H1 (cell line): ENCODE measurements at regions of chr16 and their contacts with region 1.

Region 1: DNA sequence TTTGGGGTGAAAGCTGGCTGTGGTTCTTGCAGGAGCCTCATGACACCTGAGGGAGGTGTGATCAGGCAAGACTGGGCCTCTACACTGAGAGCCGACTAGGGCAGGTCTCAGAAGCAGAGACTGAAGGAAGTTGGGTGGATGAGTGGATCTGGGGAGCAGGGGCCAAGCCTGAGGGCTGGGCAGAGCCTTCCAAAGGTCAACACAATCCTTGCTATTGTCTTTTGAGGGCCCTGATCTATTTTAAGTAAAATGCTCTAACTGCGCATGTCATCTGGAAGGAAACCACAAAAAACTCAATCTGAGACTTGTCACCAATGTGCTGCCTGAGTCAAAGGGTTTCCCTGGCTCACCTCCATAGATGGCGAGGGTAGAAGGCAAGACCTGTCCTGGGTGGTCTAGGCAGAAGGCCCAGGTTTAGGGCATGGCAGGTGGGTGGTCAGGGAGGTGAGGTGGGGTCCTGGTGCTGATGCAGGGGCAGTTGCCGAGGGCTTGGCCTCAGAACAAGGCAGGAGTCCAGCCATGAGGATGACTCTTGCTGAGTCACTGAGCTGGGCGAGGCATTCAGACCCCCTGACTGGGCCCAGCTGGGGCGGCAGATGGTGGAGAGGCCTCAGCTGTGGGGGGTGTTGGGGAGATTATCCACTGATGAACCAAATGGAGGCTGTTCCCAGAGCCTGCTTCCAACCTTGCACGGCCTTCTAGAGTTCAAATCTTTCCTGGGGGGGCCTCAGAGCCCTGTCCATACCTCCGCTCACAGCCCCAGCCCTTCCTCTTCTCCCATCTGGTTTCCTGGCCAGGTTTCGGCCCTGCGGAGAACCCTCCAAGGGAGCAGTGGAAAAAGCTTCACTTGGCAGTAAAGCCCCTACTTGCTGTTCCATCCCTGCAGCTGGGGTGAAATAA is 5.1 kb downstream of the MVP start:
- DNase-seq: no peak
- H3K4me3 ChIP-seq: no peak overlapping the region
- H3K27ac ChIP-seq: no peak overlapping the region; the same call in 1 of the 2 replicates
- H3K4me1 ChIP-seq: peaks cover 0 to 8% (median 3%) of the 10 kb centered on the region in 4 experiments; a peak in 5 of 7 replicates
- H3K27me3 ChIP-seq: 0 out of 7 replicates have a peak, but pooled peaks cover 0 to 3% (median 0%) of the 10 kb centered on the region in 4 experiments
- CTCF ChIP-seq: no peak
- EP300 ChIP-seq: no peak
- POLR2A ChIP-seq: no peak
- RAD21 ChIP-seq: no peak

Region 2: DNA sequence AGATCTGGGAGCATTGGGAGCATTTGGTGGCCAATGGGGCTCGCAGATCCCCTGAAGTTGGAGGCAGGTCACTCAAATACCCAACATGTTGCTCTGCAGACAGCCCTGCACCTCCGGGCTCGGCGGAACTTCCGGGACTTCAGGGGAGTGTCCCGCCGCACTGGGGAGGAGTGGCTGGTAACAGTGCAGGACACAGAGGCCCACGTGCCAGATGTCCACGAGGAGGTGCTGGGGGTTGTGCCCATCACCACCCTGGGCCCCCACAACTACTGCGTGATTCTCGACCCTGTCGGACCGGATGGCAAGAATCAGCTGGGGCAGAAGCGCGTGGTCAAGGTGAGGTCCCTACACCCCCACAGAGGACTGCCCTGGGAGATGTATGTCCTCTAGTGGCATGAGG is 11.2 kb after region 1 on chr16:
- CTCF ChIA-PET with region 1: interaction called, 16 read pairs
- POLR2A ChIA-PET with region 1: interaction called, 167 read pairs
- DNase-seq: no peak
- H3K4me3 ChIP-seq: no peak overlapping the region
- H3K27ac ChIP-seq: no peak overlapping the region
- H3K4me1 ChIP-seq: peaks cover 0 to 2% (median 0%) of the 10 kb centered on the region in 4 experiments; a peak in 1 of 7 replicates
- H3K27me3 ChIP-seq: no peaks in the 10 kb centered on the region
- CTCF ChIP-seq: no peak
- EP300 ChIP-seq: no peak
- POLR2A ChIP-seq: no peak
- RAD21 ChIP-seq: no peak